PC-9 (cell line): ENCODE measurements at regions of chr9 and their contacts with region 1.

Region 1: DNA sequence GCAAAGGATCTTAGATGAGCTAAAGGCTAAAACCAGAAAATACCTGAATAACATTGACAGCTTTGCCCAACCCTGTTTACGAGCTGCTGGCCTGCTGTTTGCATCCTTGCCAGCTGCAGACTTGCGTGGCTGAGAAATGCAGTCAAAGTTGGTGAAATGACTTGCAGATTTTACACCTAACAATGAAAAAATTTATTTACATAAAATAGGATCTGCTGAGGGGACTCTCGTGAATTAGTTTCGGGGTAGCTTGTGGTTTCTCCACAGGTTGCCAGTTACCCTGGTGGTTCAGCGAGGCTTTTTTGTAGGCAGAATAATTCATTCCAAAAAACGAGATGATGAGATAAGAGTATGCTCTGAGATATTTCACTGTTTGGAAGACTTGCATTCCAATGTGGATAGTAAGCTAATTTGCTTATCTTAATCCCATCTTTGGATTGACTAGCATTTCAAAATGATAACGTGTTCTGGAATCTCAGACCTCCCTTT is 65.7 kb upstream of the FANCC start:
- DNase-seq: peak; percentile 83 to 99
- H3K4me3 ChIP-seq: peak overlapping the region; percentile 30; the same call in 1 of the 2 replicates
- H3K27ac ChIP-seq: peak overlapping the region; percentile 99
- H3K4me1 ChIP-seq: peaks cover 61% of the 10 kb centered on the region
- H3K27me3 ChIP-seq: no peaks in the 10 kb centered on the region
- CTCF ChIP-seq: no peak

Region 2: DNA sequence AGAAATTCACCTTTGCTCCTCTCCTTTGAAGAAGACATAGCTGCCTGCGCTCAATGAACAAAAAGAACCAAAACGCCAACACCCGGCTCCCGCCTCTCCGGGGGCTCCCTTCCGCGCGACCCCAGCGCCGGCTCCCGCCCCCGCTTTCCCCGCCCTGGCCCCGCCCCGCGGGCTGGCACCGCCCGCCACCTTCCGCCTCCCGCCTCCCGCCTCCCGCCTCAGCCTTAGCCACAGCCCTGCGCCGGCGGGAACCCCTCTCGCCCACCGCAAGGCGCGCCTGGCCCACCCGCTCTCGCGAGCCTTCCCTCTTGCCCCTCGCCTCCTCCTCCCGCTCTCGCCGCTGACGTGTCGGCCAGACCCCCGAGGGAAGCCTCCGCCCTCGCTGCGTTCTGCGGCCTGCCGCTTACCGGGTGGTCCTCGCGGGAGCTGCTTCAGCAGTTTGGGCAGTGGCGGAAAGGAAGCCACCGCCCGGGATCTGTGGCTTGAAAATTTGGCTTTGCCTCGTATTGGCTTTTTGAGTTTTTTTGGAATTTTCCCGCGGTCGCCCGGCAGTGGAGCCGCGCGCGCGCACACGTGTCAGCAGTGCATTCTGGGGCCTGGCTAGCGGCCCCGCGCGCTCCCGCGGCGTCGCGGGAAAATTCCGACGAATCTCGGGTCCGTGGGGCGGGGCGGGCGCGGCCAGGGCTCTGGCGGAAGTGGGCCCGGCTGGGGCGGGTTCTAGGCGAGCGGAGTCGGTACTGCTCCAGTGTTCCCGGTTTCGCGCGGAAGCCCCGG is 65.9 kb before region 1 on chr9 and contains the start of gene FANCC:
- CTCF ChIA-PET with region 1: no interaction called
- POLR2A ChIA-PET with region 1: interaction called, 7 read pairs
- intact Hi-C with region 1: loop called (anchors 1 kb)
- DNase-seq: peak; percentile 73 to 91
- H3K4me3 ChIP-seq: peak within 1 kb of the TSS; percentile 80
- H3K27ac ChIP-seq: peak within 1 kb of the TSS; percentile 97
- H3K4me1 ChIP-seq: peaks cover 37% of the 10 kb centered on the region
- H3K27me3 ChIP-seq: no peaks in the 10 kb centered on the region
- CTCF ChIP-seq: no peak
- total RNA-seq, gene FANCC: 31.5 and 44.7 TPM in 2 replicates

Region 3: DNA sequence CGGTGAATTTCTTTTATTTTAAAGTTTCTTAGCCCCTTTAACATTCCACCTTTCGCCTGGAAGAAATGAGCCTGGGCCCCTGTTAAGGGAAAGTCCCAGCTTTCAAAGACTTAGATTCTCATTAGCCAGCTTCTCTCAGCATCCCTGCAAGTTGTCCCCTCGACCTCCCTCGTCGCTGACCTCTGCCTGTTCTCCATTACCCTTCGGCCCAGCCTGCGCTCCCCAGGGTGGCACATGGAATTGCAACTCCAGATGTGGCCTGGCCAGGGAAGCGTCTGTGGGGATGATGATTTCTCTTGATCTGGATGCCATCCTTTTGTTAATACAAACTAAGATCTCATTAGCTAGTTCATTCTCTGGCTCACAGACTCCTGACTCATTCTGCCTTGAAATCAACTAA is 22.4 kb before region 1 on chr9:
- CTCF ChIA-PET with region 1: no interaction called
- POLR2A ChIA-PET with region 1: interaction called, 5 read pairs
- intact Hi-C with region 1: loop called (anchors 1 kb)
- DNase-seq: no peak
- H3K4me3 ChIP-seq: no peak overlapping the region
- H3K27ac ChIP-seq: no peak overlapping the region
- H3K4me1 ChIP-seq: peaks cover 12% of the 10 kb centered on the region; the same call in 1 of the 2 replicates
- H3K27me3 ChIP-seq: no peaks in the 10 kb centered on the region
- CTCF ChIP-seq: no peak

Region 4: DNA sequence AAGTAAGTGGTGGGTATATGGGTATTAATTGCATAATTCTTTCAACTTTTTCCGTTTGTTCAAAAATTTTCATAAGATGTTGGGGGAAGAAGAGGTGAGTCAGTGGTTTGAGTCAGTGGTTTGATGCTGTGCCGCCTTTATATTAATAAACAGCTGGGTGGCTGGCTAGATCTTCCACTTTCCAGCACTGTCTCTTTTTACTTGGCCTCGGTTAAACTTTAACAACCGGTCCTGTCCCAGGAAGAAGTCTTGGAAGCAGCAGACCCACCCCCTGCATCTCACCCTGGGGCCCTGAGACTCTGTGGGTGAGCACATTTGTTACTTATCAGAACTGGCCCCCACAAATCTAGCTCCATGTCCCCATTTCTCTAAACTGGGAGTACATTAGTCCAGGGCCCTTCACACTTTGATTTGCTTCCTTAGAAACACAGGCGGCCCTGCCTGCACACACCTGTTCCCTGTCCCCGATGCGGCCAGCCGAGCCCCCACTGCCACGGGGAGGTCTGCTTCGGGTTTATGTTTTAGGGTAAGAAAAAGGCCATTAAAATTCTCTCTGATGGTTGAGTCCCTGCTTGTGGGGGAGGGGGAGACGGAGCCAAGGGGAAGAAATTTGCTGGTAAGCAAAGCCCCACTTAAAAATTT is 42.8 kb after region 1 on chr9:
- CTCF ChIA-PET with region 1: no interaction called
- POLR2A ChIA-PET with region 1: interaction called, 5 read pairs
- intact Hi-C with region 1: loop called (anchors 1 kb)
- DNase-seq: peak in 1 of 2 experiments; percentile 20
- H3K4me3 ChIP-seq: peak overlapping the region; percentile 92
- H3K27ac ChIP-seq: peak overlapping the region; percentile 87
- H3K4me1 ChIP-seq: peaks cover 12% of the 10 kb centered on the region
- H3K27me3 ChIP-seq: no peaks in the 10 kb centered on the region
- CTCF ChIP-seq: no peak